Right lobe of liver (tissue), 6 donors: ENCODE measurements at regions of chr9 and their contacts with region 1.

Region 1: DNA sequence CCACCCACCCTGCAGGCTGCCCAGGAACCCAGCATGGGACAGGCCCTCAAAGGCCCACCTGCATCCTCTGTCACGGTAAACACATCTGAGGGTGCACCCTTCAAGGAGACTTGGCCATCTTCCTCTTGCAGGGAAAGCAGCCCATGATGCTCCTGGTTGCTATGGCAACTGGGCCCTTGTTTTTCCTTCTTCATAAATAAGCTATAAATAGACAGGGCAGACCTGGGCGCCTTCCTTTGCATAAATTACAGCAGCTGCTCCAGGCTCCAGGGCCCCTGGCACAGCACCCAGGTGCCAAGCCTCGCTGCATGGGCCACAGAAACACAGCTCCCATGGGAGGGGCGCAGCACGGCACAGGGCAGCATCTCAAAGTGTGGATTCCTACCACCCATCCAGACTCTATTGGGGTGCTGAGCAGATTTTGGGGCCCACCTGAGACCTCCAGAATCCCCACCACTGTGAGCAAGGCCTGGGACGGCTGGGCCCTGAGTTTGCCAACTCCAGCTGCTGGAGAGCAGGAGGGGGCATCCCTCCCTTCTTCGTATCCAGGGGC is 5.8 kb upstream of the PSMB7 start:
- DNase-seq: no peak
- ATAC-seq: no peak
- H3K4me3 ChIP-seq: no peak overlapping the region
- H3K27ac ChIP-seq: no peak overlapping the region
- H3K4me1 ChIP-seq: no peaks in the 10 kb centered on the region
- H3K27me3 ChIP-seq: no peaks in the 10 kb centered on the region
- CTCF ChIP-seq: no peak
- POLR2A ChIP-seq: no peak

Region 2: DNA sequence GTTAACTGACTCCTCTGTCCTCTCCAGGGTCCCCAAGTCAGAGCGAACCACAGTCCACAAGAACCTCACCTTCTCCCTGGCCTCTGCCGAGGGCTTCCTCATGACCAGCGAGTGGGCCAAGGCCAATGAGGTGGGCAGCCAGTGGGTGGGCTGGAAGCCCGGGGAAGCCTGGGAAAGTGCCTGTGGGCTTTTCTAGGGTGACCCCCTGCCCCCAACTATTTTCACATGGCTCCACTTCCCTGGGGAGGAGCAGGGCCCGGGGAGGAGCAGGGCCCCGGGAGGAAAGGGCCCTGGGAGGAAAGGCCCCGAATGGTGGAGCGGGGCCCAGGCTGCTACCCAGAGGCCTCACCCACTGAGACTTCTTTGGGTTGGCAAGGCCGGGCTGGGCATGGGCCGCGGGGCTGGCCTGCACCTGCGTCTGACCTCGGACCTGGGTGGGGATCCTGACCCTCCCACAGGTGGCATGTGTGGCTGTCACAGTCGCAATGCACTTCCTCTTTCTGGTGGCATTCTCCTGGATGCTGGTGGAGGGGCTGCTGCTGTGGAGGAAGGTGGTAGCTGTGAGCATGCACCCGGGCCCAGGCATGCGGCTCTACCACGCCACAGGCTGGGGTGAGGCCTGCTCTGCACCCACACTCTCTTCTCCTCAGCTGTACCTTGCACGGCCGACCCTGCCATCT is 47.1 kb after region 1 on chr9:
- intact Hi-C with region 1: no loop called
- DNase-seq: peak in 1 of 3 donors; percentile 40
- ATAC-seq: no peak
- H3K4me3 ChIP-seq: no peak overlapping the region
- H3K27ac ChIP-seq: no peak overlapping the region
- H3K4me1 ChIP-seq: no peaks in the 10 kb centered on the region
- H3K27me3 ChIP-seq: no peaks in the 10 kb centered on the region
- CTCF ChIP-seq: no peak
- POLR2A ChIP-seq: no peak

Region 3: GRCh38 chr9:124532897-124533296 is 111.8 kb after region 1 on chr9:
- intact Hi-C with region 1: loop called (anchors 5 kb)
- DNase-seq: no peak
- ATAC-seq: no peak
- H3K4me3 ChIP-seq: no peak overlapping the region
- H3K27ac ChIP-seq: no peak overlapping the region
- H3K4me1 ChIP-seq: no peaks in the 10 kb centered on the region
- H3K27me3 ChIP-seq: no peaks in the 10 kb centered on the region
- CTCF ChIP-seq: no peak
- POLR2A ChIP-seq: no peak

Region 4: DNA sequence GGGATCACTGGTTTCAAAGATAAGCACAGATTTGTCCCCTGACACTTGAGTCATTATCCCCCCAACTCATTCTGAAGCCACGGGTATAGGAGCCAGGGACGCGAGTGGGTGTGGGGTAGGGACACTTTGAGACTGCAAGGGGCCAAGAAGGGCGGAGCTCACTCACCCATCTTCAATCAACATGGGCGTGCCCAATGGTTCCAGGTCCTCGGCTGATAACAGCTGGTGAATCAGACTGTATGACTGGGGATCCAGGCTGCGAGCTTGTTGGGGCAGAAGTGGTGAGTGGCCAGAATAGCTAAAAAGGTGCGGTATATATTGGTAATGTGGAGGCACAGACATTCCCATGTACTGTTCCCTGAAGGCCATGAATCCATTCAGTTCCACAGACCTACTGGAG is 116.9 kb after region 1 on chr9:
- intact Hi-C with region 1: loop called (anchors 5 kb)
- DNase-seq: no peak
- ATAC-seq: no peak
- H3K4me3 ChIP-seq: no peak overlapping the region
- H3K27ac ChIP-seq: no peak overlapping the region
- H3K4me1 ChIP-seq: no peaks in the 10 kb centered on the region
- H3K27me3 ChIP-seq: no peaks in the 10 kb centered on the region
- CTCF ChIP-seq: no peak
- POLR2A ChIP-seq: no peak